ENCODE measurements at regions of chr6 and their contacts with region 1.

Region 1: DNA sequence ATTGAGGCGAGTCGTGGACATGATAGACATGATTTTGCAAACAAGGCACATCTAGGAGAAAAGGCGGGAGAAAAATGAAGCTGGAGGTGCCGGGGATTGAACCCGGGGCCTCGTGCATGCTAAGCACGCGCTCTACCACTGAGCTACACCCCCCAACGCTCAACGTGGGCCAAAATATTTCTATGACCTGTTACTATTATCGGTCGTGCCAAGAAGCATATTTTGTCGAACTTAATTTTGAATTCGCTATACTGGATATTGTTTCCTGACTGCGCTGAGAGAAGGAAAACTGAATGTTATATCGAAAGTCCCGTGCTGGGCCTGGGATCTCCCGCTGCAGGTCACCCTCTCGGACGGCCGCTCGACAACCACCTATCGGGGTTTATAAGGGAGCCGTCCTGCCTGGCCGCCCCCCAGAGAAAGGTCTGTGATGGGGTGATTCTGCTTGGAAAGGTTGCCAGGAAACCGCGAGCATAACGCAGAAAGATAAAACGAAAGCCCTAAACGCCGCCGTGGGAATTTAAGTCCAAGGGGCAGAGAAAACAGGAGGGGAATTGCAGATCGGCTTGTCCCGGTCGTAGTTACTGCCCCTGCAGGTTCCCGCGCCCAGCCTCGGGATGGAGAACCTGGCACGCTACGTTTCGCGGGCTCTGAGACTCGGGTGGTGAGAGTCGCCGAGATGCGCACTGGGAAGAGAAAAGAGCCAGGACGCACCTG is 60.0 kb downstream of the TRIM27 start:
- DNase-seq: peak; percentile 54
- ATAC-seq: peak; percentile 30
- H3K4me3 Mint-ChIP-seq: peak overlapping the region; percentile 85
- H3K27ac Mint-ChIP-seq: peak overlapping the region; percentile 90
- H3K4me1 Mint-ChIP-seq: peaks cover 27% of the 10 kb centered on the region
- H3K27me3 Mint-ChIP-seq: peaks cover 4% of the 10 kb centered on the region
- CTCF ChIP-seq: no peak

Region 2: GRCh38 chr6:28880894-28881780 is 17.4 kb after region 1 on chr6:
- CTCF ChIA-PET with region 1: no interaction called
- POLR2A ChIA-PET with region 1: interaction called, 10 read pairs
- intact Hi-C with region 1: loop called (anchors 1 kb)
- DNase-seq: peak; percentile 48
- ATAC-seq: peak; percentile 39
- H3K4me3 Mint-ChIP-seq: peak overlapping the region; percentile 75
- H3K27ac Mint-ChIP-seq: peak overlapping the region; percentile 83
- H3K4me1 Mint-ChIP-seq: peaks cover 21% of the 10 kb centered on the region
- H3K27me3 Mint-ChIP-seq: peaks cover 51% of the 10 kb centered on the region
- CTCF ChIP-seq: no peak

Region 3: GRCh38 chr6:28923318-28924102 is 59.7 kb after region 1 on chr6 and contains the start of gene TRIM27:
- CTCF ChIA-PET with region 1: no interaction called
- POLR2A ChIA-PET with region 1: interaction called, 23 read pairs
- intact Hi-C with region 1: loop called (anchors 1 kb)
- DNase-seq: peak; percentile 85
- ATAC-seq: peak; percentile 87
- H3K4me3 Mint-ChIP-seq: peak within 1 kb of the TSS; percentile 92
- H3K27ac Mint-ChIP-seq: peak within 1 kb of the TSS; percentile 92
- H3K4me1 Mint-ChIP-seq: peaks cover 42% of the 10 kb centered on the region
- H3K27me3 Mint-ChIP-seq: no peaks in the 10 kb centered on the region
- CTCF ChIP-seq: no peak
- total RNA-seq, gene TRIM27: 59.5 and 64.8 TPM in 2 replicates

Region 4: GRCh38 chr6:28940858-28941680 is 77.3 kb after region 1 on chr6:
- CTCF ChIA-PET with region 1: interaction called, 3 read pairs
- POLR2A ChIA-PET with region 1: interaction called, 11 read pairs
- intact Hi-C with region 1: loop called (anchors 1 kb)
- DNase-seq: peak; percentile 36
- ATAC-seq: peak; percentile 66
- H3K4me3 Mint-ChIP-seq: peak overlapping the region; percentile 95
- H3K27ac Mint-ChIP-seq: peak overlapping the region; percentile 88
- H3K4me1 Mint-ChIP-seq: peaks cover 47% of the 10 kb centered on the region
- H3K27me3 Mint-ChIP-seq: peaks cover 3% of the 10 kb centered on the region
- CTCF ChIP-seq: no peak

Measured in activated B cell treated with CpG ODN at 0.5 μM for 24 hours (primary cell).